ENCODE measurements at regions of chr14 and their contacts with region 1.

Region 1: GRCh38 chr14:72745991-72746980 is 147.6 kb downstream of the DPF3 start:
- DNase-seq: peak in 1 of 2 donors; percentile 72
- ATAC-seq: peak; percentile 80 to 88
- H3K4me3 ChIP-seq: no peak overlapping the region
- H3K27ac ChIP-seq: peak overlapping the region; percentile 63 to 76 (median 66)
- H3K4me1 ChIP-seq: peaks cover 27 to 31% of the 10 kb centered on the region in 2 donors
- H3K27me3 ChIP-seq: no peaks in the 10 kb centered on the region
- CTCF ChIP-seq: peak in 4 of 5 experiments; percentile 24 to 46 (median 43)
- POLR2A ChIP-seq: no peak

Region 2: DNA sequence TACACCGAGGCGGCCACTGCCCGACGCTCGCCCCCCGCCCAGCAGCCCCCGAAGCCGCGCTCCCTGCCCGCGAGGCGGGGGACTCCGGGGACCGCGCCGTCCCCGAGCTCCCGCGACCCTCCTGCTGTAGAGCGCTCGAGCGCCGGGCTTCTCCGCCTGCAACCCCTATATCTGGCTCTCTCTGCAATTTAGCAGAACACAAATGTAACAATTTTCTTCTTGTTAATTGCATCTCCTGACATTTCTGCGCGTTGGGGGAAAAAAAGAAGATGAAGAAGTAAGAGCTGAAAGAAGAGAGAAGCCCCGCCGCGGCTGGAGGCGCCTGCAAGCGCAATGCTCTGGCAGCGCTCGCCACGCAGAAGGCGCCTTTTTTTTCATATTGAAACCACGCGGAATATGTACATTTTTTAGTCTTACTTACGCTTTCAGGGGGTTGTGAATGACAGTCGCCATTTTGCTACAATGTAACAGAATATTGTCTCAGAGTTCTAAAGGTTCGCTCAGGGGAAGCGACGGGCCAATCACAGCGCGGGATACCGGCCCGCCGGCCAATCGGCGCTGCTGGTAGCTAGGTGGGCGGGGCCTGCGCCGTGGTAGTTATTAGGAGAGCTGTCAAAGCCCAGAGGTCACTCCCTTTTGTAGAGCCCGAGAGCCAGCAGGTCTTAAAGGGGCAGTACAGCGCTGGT is 147.5 kb after region 1 on chr14 and contains the start of gene DPF3:
- in situ Hi-C with region 1: loop called in 1 of 4 experiments (anchors 10 kb)
- intact Hi-C with region 1: no loop called
- DNase-seq: peak; percentile 97 to 98
- ATAC-seq: peak; percentile 88 to 91
- H3K4me3 ChIP-seq: peak within 1 kb of the TSS; percentile 89 to 99 (median 96)
- H3K27ac ChIP-seq: peak within 1 kb of the TSS; percentile 91 to 94 (median 94)
- H3K4me1 ChIP-seq: peaks cover 48 to 51% of the 10 kb centered on the region in 2 donors
- H3K27me3 ChIP-seq: no peaks in the 10 kb centered on the region
- CTCF ChIP-seq: no peak
- POLR2A ChIP-seq: peak; percentile 86 to 98
- total RNA-seq, gene DPF3: 16.7 to 27.8 (median 20.3) TPM

Region 3: GRCh38 chr14:72904840-72905561 is 158.7 kb after region 1 on chr14:
- in situ Hi-C with region 1: loop called in 1 of 4 experiments (anchors 10 kb)
- intact Hi-C with region 1: loop called (anchors 1 kb)
- DNase-seq: peak; percentile 49 to 72
- ATAC-seq: peak; percentile 48 to 49
- H3K4me3 ChIP-seq: no peak overlapping the region
- H3K27ac ChIP-seq: peak overlapping the region; percentile 6 to 87 (median 31)
- H3K4me1 ChIP-seq: peaks cover 37 to 69% of the 10 kb centered on the region in 2 donors
- H3K27me3 ChIP-seq: no peaks in the 10 kb centered on the region
- CTCF ChIP-seq: peak; percentile 92 to 97 (median 95)
- POLR2A ChIP-seq: no peak